Left cardiac atrium (tissue), 4 donors: ENCODE measurements at regions of chr3 and their contacts with region 1.

Region 1: GRCh38 chr3:108516881-108517280 is 6.5 kb upstream of the MYH15 start:
- DNase-seq: no peak
- ATAC-seq: no peak

Region 2: GRCh38 chr3:108136561-108137459 is 380.1 kb before region 1 on chr3:
- intact Hi-C with region 1: no loop called
- DNase-seq: no peak
- ATAC-seq: no peak

Region 3: GRCh38 chr3:108453565-108453964 is 63.3 kb before region 1 on chr3:
- intact Hi-C with region 1: no loop called
- DNase-seq: no peak
- ATAC-seq: no peak

Region 4: GRCh38 chr3:108500728-108501127 is 16.2 kb before region 1 on chr3:
- intact Hi-C with region 1: loop called in 1 of 2 experiments (anchors 1 kb)
- DNase-seq: no peak
- ATAC-seq: no peak